Activated CD4-positive, alpha-beta memory T cell treated with anti-CD3 and anti-CD28 coated beads for 36 hours (primary cell): ENCODE measurements at regions of chr7 and their contacts with region 1.

Region 1: GRCh38 chr7:139016931-139017511 is 18.8 kb downstream of the ZC3HAV1L start:
- DNase-seq: peak; percentile 67
- H3K4me3 Mint-ChIP-seq: no peak overlapping the region
- H3K27ac Mint-ChIP-seq: no peak overlapping the region
- H3K4me1 Mint-ChIP-seq: no peaks in the 10 kb centered on the region
- H3K27me3 Mint-ChIP-seq: peaks cover 2% of the 10 kb centered on the region

Region 2: GRCh38 chr7:139035586-139036353 is 18.7 kb after region 1 on chr7 and contains the start of gene ZC3HAV1L:
- CTCF ChIA-PET with region 1: interaction called, 20 read pairs
- POLR2A ChIA-PET with region 1: interaction called, 4 read pairs
- intact Hi-C with region 1: no loop called
- DNase-seq: peak; percentile 72
- H3K4me3 Mint-ChIP-seq: peak within 1 kb of the TSS; percentile 81
- H3K27ac Mint-ChIP-seq: peak within 1 kb of the TSS; percentile 70
- H3K4me1 Mint-ChIP-seq: peaks cover 21% of the 10 kb centered on the region
- H3K27me3 Mint-ChIP-seq: no peaks in the 10 kb centered on the region
- total RNA-seq, gene ZC3HAV1L: 11.8 to 14.7 TPM

Region 3: GRCh38 chr7:139058943-139059342 is 41.9 kb after region 1 on chr7:
- CTCF ChIA-PET with region 1: interaction called, 8 read pairs
- POLR2A ChIA-PET with region 1: no interaction called
- intact Hi-C with region 1: loop called (anchors 5 kb)
- DNase-seq: peak; percentile 0
- H3K4me3 Mint-ChIP-seq: no peak overlapping the region
- H3K27ac Mint-ChIP-seq: peak overlapping the region; percentile 69
- H3K4me1 Mint-ChIP-seq: peaks cover 78% of the 10 kb centered on the region
- H3K27me3 Mint-ChIP-seq: no peaks in the 10 kb centered on the region

Region 4: DNA sequence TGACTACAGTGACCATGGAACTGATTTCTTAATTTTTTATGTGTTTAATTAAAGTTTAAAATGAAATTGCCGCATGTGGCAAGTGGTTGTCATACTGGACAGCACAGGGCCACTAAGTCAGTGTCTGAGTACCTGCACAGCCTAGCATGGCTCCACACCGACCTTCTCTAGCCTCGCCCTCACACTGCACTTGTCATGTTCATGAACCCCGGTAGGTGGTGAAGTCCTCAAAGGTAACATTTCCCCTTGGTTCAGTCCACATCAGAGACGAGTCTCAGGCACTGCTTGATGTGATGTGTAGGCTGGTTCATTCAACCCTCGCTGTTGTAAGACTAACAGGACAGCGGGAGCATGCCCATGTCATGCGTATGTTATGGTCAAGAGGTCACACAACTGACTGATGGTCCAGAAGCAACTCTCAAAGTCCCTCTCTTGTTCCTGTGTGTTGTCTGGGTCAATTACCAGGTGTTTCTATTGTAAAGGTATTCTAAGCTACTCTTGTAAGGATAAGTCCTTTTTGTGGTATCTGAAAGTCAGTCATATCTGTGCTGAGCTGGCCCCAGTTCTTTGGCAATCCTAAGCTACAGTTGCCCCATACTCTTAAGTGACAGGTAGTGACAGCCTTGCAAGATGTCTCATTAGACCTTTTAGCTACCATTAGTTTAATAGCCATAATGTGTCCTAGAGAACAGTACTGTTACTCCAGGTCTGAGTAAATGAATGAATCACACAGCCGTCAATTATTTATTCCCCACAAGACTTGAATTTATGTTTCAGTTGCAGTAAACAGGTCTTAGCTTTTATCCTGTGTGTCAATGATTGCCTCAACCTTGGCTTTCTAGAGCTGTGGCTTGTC is 51.8 kb after region 1 on chr7:
- CTCF ChIA-PET with region 1: interaction called, 16 read pairs
- POLR2A ChIA-PET with region 1: no interaction called
- intact Hi-C with region 1: loop called (anchors 5 kb)
- DNase-seq: peak; percentile 30
- H3K4me3 Mint-ChIP-seq: no peak overlapping the region
- H3K27ac Mint-ChIP-seq: peak overlapping the region; percentile 53
- H3K4me1 Mint-ChIP-seq: peaks cover 58% of the 10 kb centered on the region
- H3K27me3 Mint-ChIP-seq: no peaks in the 10 kb centered on the region

Region 5: DNA sequence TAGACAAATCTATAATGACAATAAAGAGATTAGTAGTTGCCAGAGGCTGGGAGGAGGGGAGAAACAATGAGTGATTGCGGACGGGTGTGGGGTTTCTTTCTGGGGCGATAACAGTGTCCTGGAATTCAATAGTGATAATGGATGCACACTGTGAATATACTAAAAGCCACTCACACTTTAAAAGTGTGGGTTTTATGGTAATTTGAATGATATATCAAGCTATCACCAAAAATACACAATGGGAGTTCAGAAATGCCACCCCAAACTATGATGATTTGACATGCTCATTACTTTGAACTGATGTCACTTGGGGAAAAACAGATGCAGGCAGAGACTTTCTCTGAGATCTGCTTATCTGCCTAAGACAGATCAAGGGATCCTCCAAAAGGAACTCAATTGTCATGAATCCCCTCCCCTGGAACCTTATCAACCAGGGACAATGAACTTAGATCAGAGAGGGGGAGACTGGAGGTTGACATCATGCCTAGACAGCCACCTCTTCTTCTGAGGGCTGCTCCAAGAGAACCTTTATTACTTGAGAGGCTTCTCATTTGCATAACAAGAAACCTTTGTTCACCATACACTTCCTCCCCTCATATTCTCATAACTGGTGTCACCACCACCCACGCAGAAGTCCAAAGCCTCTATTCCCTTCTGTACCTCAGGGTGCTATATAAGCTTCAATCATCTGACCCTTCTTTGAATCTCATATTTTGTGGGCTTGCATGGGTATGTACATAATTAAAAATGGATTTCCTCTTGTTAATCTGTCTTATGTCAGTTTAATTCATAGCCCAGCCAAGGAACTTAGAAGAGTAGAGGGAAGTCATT is 107.3 kb after region 1 on chr7:
- CTCF ChIA-PET with region 1: interaction called, 3 read pairs
- POLR2A ChIA-PET with region 1: no interaction called
- intact Hi-C with region 1: loop called (anchors 10 kb)
- DNase-seq: peak; percentile 59
- H3K4me3 Mint-ChIP-seq: no peak overlapping the region
- H3K27ac Mint-ChIP-seq: peak overlapping the region; percentile 31
- H3K4me1 Mint-ChIP-seq: peaks cover 36% of the 10 kb centered on the region
- H3K27me3 Mint-ChIP-seq: no peaks in the 10 kb centered on the region